Activated naive CD4-positive, alpha-beta T cell treated with anti-CD3 and anti-CD28 coated beads for 36 hours (primary cell): ENCODE measurements at regions of chr5 and their contacts with region 1.

Region 1: GRCh38 chr5:77211691-77212047 is 1.2 kb downstream of the PDE8B start:
- DNase-seq: no peak
- H3K4me3 Mint-ChIP-seq: peak overlapping the region; percentile 65
- H3K27ac Mint-ChIP-seq: no peak overlapping the region
- H3K4me1 Mint-ChIP-seq: peaks cover 11% of the 10 kb centered on the region
- H3K27me3 Mint-ChIP-seq: peaks cover 64% of the 10 kb centered on the region

Region 2: DNA sequence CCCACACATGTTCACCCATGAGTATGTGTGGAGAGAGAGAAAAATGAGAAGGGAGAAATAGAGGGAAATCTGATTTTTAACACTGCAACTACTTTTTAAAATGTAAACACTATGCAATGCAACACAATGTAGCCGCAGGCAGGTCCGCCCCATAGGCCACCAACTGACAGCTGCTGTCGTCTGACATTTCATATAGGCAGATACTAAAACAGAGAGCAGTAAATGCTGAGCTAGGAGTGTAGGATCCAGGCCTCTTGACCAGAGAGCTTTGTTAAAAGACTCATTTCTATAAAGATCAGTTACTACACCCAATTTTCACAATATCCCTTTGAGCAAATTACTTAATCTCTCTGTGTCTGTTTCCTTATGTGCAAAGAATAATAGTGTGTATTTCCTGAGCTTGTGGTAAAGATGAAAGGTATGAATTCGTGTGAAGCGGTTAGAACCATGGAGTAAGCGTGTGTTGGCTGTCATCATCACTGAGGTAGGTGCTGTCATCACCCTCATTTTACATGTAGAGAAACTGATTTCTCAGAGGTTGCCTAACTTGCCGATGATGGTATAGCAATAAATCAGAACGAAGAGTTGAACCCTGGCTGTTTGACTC is 56.4 kb before region 1 on chr5:
- CTCF ChIA-PET with region 1: no interaction called
- intact Hi-C with region 1: loop called (anchors 2 kb)
- DNase-seq: peak; percentile 66
- H3K4me3 Mint-ChIP-seq: no peak overlapping the region
- H3K27ac Mint-ChIP-seq: peak overlapping the region; percentile 60
- H3K4me1 Mint-ChIP-seq: peaks cover 27% of the 10 kb centered on the region
- H3K27me3 Mint-ChIP-seq: no peaks in the 10 kb centered on the region